CD4-positive, alpha-beta memory T cell (primary cell): ENCODE measurements at regions of chr16 and their contacts with region 1.

Region 1: GRCh38 chr16:15704545-15704987 is 54.5 kb downstream of the NDE1 start:
- DNase-seq: peak; percentile 57 to 68 (median 64)
- H3K4me3 ChIP-seq: no peak overlapping the region
- H3K4me3 Mint-ChIP-seq: no peak overlapping the region
- H3K27ac ChIP-seq: no peak overlapping the region
- H3K27ac Mint-ChIP-seq: peak overlapping the region in 5 of 7 donors; percentile 17 to 78 (median 72)
- H3K4me1 ChIP-seq: no peaks in the 10 kb centered on the region
- H3K4me1 Mint-ChIP-seq: peaks cover 5 to 7% (median 6%) of the 10 kb centered on the region in 4 donors
- H3K27me3 ChIP-seq: no peaks in the 10 kb centered on the region
- H3K27me3 Mint-ChIP-seq: no peaks in the 10 kb centered on the region

Region 2: GRCh38 chr16:15427648-15428239 is 276.8 kb before region 1 on chr16:
- CTCF ChIA-PET with region 1: interaction called, 31 read pairs
- POLR2A ChIA-PET with region 1: no interaction called
- intact Hi-C with region 1: loop called (anchors 1 kb)
- DNase-seq: peak; percentile 27 to 53 (median 40)
- H3K4me3 ChIP-seq: no peak overlapping the region
- H3K4me3 Mint-ChIP-seq: no peak overlapping the region
- H3K27ac ChIP-seq: no peak overlapping the region
- H3K27ac Mint-ChIP-seq: peak overlapping the region in 1 of 7 donors; percentile 56
- H3K4me1 ChIP-seq: no peaks in the 10 kb centered on the region
- H3K4me1 Mint-ChIP-seq: peaks cover 0 to 3% (median under 1%) of the 10 kb centered on the region in 4 donors
- H3K27me3 ChIP-seq: no peaks in the 10 kb centered on the region
- H3K27me3 Mint-ChIP-seq: peaks cover 6 to 7% of the 10 kb centered on the region in 2 donors

Region 3: GRCh38 chr16:15682105-15682570 is 22.4 kb before region 1 on chr16:
- CTCF ChIA-PET with region 1: interaction called, 10 read pairs
- POLR2A ChIA-PET with region 1: no interaction called
- intact Hi-C with region 1: no loop called
- DNase-seq: peak; percentile 12 to 64 (median 26)
- H3K4me3 ChIP-seq: no peak overlapping the region
- H3K4me3 Mint-ChIP-seq: no peak overlapping the region
- H3K27ac ChIP-seq: no peak overlapping the region
- H3K27ac Mint-ChIP-seq: peak overlapping the region in 5 of 7 donors; percentile 47 to 79 (median 63)
- H3K4me1 ChIP-seq: no peaks in the 10 kb centered on the region
- H3K4me1 Mint-ChIP-seq: peaks cover 5 to 11% (median 8%) of the 10 kb centered on the region in 4 donors
- H3K27me3 ChIP-seq: no peaks in the 10 kb centered on the region
- H3K27me3 Mint-ChIP-seq: no peaks in the 10 kb centered on the region

Region 4: GRCh38 chr16:15690296-15690695 is 14.3 kb before region 1 on chr16:
- CTCF ChIA-PET with region 1: interaction called, 32 read pairs
- POLR2A ChIA-PET with region 1: no interaction called
- intact Hi-C with region 1: no loop called
- DNase-seq: no peak
- H3K4me3 ChIP-seq: no peak overlapping the region
- H3K4me3 Mint-ChIP-seq: no peak overlapping the region
- H3K27ac ChIP-seq: no peak overlapping the region
- H3K27ac Mint-ChIP-seq: no peak overlapping the region
- H3K4me1 ChIP-seq: no peaks in the 10 kb centered on the region
- H3K4me1 Mint-ChIP-seq: peaks cover 0 to 4% (median under 1%) of the 10 kb centered on the region in 4 donors
- H3K27me3 ChIP-seq: no peaks in the 10 kb centered on the region
- H3K27me3 Mint-ChIP-seq: no peaks in the 10 kb centered on the region